ENCODE measurements at regions of chr20 and their contacts with region 1.

Region 1: DNA sequence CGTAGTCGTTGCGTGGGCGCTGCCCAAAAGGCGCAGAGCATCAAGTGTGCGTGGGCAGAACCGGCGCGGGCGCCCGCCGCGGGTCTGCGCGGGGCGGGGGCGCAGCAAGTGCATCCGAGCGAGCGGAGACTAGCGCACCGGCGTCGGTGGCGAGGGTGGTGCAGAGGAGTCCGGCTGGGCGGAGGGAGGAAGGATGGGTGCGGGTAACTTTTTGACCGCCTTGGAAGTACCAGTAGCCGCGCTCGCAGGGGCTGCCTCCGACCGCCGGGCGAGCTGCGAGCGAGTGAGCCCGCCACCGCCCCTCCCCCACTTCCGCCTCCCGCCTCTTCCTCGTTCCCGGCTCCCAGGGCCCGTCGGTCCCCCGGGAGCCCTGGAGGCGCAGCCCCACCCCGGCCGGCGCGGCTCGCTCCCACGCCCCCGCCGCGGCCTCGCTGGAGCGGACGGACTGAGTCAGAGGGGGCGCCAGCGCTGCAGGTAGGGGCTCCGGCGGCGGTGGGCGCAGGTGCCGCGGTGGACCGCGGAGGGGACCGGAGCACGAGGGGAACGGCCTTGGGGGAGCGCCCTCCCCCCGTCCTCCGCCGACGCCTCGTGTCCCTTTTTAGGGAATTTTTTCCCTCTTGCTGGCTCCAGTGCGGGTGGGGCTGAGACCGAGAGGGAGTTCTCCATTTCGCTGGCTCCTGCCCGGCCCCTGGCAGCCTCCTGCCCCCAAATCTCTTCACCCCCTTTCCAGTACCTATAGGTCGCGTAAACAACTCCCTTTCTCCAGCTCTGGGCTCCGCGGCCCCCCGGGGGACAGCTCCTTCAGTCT is 1.6 kb upstream of the DBNDD2 start:
- DNase-seq: peak; percentile 68 to 81 (median 79)
- H3K4me3 ChIP-seq: peak overlapping the region; percentile 51
- H3K27ac ChIP-seq: peak overlapping the region; percentile 58 to 63
- H3K4me1 ChIP-seq: peaks cover 3% of the 10 kb centered on the region
- H3K27me3 ChIP-seq: no peaks in the 10 kb centered on the region
- CTCF ChIP-seq: peak in 1 of 3 donors; percentile 25
- EP300 ChIP-seq: no peak
- POLR2A ChIP-seq: peak; percentile 58

Region 2: GRCh38 chr20:45362804-45363610 is 43.5 kb before region 1 on chr20 and contains the start of gene SYS1:
- intact Hi-C with region 1: loop called in 1 of 4 experiments (anchors 2 kb)
- DNase-seq: peak; percentile 98 to 99 (median 99)
- H3K4me3 ChIP-seq: peak within 1 kb of the TSS; percentile 52
- H3K27ac ChIP-seq: peak within 1 kb of the TSS; percentile 81 to 86
- H3K4me1 ChIP-seq: peaks cover 6% of the 10 kb centered on the region
- H3K27me3 ChIP-seq: no peaks in the 10 kb centered on the region
- CTCF ChIP-seq: peak; percentile 92 to 99 (median 93)
- EP300 ChIP-seq: no peak
- POLR2A ChIP-seq: peak; percentile 85
- total RNA-seq, gene SYS1: 29.2 to 69.7 (median 32.8) TPM

Region 3: GRCh38 chr20:45538209-45538799 is 131.8 kb after region 1 on chr20:
- intact Hi-C with region 1: no loop called
- DNase-seq: no peak
- H3K4me3 ChIP-seq: no peak overlapping the region
- H3K27ac ChIP-seq: no peak overlapping the region
- H3K4me1 ChIP-seq: no peaks in the 10 kb centered on the region
- H3K27me3 ChIP-seq: no peaks in the 10 kb centered on the region
- CTCF ChIP-seq: no peak
- EP300 ChIP-seq: no peak
- POLR2A ChIP-seq: no peak

Region 4: DNA sequence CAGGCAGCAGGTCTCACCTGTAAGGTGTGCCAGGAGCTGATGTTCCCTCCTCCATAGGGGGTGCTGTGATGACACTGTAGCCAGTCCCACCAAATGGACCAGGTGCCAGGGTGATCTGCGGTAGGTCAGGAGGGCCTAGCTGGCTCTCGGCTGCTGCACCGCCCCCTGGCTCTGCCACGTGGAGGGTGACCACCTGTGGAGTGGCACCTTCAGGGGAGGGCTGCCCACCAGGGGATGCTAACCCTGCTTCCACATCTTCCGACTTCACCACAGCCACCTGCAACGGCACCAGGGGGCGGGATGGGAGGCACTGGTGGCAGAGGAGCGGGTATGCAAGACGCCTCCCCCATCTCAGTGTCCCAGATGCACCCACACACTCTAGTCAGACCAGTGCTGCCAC is 547.2 kb after region 1 on chr20:
- intact Hi-C with region 1: loop called in 1 of 4 experiments (anchors 5 kb)
- DNase-seq: peak in 2 of 5 donors; percentile 21 to 37
- H3K4me3 ChIP-seq: no peak overlapping the region
- H3K27ac ChIP-seq: no peak overlapping the region
- H3K4me1 ChIP-seq: no peaks in the 10 kb centered on the region
- H3K27me3 ChIP-seq: no peaks in the 10 kb centered on the region
- CTCF ChIP-seq: no peak
- EP300 ChIP-seq: no peak
- POLR2A ChIP-seq: no peak